Left ventricle myocardium inferior (tissue), 1 donor: ENCODE measurements at regions of chr9 and their contacts with region 1.

Region 1: GRCh38 chr9:95363051-95363841 is 45.7 kb upstream of the FANCC start:
- DNase-seq: no peak
- H3K4me3 ChIP-seq: peak overlapping the region; percentile 42
- H3K27ac ChIP-seq: no peak overlapping the region
- H3K4me1 ChIP-seq: peaks cover 5% of the 10 kb centered on the region
- H3K27me3 ChIP-seq: peaks cover 37% of the 10 kb centered on the region
- CTCF ChIP-seq: no peak

Region 2: DNA sequence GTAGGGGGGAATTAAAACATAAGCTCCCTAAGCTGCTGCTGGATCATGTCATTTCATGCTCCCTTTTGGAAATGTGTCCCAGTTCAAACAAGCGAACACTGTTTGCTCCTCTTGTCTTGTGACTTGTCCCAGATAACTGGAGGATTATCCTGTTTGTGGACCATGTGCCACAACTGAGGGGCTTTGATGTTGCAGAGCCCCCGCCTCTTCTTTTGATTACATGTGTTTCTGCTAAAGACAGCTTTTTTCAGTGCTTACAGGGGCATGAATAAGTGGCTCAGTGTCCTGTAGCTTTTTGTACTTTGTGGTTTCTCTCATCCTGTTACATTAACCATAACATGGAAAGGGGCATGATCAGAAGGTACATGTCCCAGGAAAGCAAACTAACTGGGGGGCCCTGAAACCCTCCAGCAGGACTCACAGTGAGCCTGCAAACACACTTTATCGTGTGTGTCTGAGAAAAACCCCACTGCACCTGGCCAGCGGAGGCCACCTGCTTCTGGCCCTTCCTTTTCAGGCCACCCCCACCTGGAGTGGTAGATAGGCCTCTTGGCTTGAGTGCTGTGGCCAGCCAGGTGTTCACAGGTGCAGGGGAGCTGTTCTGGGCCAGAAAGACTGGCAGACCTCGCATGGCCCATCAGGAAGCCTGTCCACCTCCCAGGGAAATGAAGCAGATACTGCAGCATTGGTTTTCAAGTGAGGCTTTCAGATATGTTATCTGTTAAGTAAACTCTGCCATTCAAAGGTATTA is 331.4 kb before region 1 on chr9:
- intact Hi-C with region 1: no loop called
- DNase-seq: no peak
- H3K4me3 ChIP-seq: peak overlapping the region; percentile 38
- H3K27ac ChIP-seq: peak overlapping the region; percentile 84
- H3K4me1 ChIP-seq: peaks cover 100% of the 10 kb centered on the region
- H3K27me3 ChIP-seq: no peaks in the 10 kb centered on the region
- CTCF ChIP-seq: no peak

Region 3: GRCh38 chr9:95434116-95435073 is 71.1 kb after region 1 on chr9:
- intact Hi-C with region 1: no loop called
- DNase-seq: no peak
- H3K4me3 ChIP-seq: no peak overlapping the region
- H3K27ac ChIP-seq: no peak overlapping the region
- H3K4me1 ChIP-seq: no peaks in the 10 kb centered on the region
- H3K27me3 ChIP-seq: no peaks in the 10 kb centered on the region
- CTCF ChIP-seq: no peak

Region 4: GRCh38 chr9:95552814-95553546 is 189.7 kb after region 1 on chr9:
- intact Hi-C with region 1: loop called (anchors 10 kb)
- DNase-seq: peak; percentile 53
- H3K4me3 ChIP-seq: peak overlapping the region; percentile 62
- H3K27ac ChIP-seq: no peak overlapping the region
- H3K4me1 ChIP-seq: peaks cover 10% of the 10 kb centered on the region
- H3K27me3 ChIP-seq: peaks cover 60% of the 10 kb centered on the region
- CTCF ChIP-seq: no peak